CD8-positive, alpha-beta T cell (primary cell): ENCODE measurements at regions of chrX and their contacts with region 1.

Region 1: GRCh38 chrX:91331476-91331875 is 103.2 kb upstream of the PABPC5 start:
- DNase-seq: no peak
- ATAC-seq: no peak
- H3K4me3 ChIP-seq: no peak overlapping the region
- H3K4me3 Mint-ChIP-seq: no peak overlapping the region
- H3K27ac ChIP-seq: no peak overlapping the region
- H3K27ac Mint-ChIP-seq: no peak overlapping the region
- H3K4me1 ChIP-seq: no peaks in the 10 kb centered on the region
- H3K4me1 Mint-ChIP-seq: no peaks in the 10 kb centered on the region
- H3K27me3 ChIP-seq: no peaks in the 10 kb centered on the region
- H3K27me3 Mint-ChIP-seq: no peaks in the 10 kb centered on the region
- CTCF ChIP-seq: no peak

Region 2: GRCh38 chrX:91389026-91389425 is 57.5 kb after region 1 on chrX:
- CTCF ChIA-PET with region 1: no interaction called
- POLR2A ChIA-PET with region 1: no interaction called
- intact Hi-C with region 1: loop called in 1 of 2 experiments (anchors 2 kb)
- DNase-seq: no peak
- ATAC-seq: no peak
- H3K4me3 ChIP-seq: no peak overlapping the region
- H3K4me3 Mint-ChIP-seq: no peak overlapping the region
- H3K27ac ChIP-seq: no peak overlapping the region
- H3K27ac Mint-ChIP-seq: no peak overlapping the region
- H3K4me1 ChIP-seq: no peaks in the 10 kb centered on the region
- H3K4me1 Mint-ChIP-seq: no peaks in the 10 kb centered on the region
- H3K27me3 ChIP-seq: no peaks in the 10 kb centered on the region
- H3K27me3 Mint-ChIP-seq: no peaks in the 10 kb centered on the region
- CTCF ChIP-seq: no peak